PC-3 (cell line): ENCODE measurements at regions of chr19 and their contacts with region 1.

Region 1: DNA sequence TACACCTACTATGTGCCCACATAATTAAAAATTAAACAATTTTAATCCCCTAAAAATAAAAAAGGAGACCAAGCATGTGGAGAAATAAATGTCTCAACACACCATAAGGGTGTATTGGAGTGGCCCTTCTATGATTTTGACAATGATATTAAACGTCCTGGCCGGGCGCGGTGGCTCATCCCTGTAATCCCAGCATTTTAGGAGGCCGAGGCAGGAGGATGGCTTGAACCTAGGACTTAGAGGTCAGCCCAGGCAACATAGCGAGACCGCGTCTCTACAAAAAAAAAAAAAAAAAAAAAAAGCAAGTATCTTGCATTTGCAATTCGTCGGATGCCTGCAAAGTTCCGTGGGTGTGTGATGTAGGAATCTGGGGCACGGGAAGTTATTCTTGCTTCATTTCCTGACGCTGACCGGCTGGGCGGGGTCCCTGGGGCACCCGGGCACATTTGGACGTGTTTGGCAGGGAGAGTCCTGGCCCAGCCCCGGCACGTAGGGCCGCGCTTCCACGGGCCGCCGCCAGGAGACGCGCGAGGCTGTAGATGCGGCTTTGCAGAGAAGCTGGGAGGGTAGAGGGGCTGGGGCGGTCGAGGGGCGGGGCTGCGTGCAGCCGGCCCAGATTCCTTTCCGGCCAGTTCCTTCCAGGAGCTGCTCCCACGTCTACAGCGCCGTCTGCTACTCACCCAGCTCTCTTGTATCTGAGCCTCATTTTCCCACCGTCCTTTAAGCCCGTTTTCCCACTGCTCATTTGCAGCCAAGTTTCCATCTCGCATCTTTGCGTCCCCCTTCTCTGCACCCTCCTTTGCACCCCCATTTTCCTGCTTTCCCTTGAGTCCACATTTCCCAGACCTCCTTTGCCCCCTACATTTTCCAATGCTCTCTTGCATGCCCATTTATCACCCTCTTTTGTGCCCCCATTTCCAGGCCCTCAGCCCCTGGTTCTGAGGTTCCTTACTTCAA is 2.2 kb upstream of the TSPAN16 start:
- DNase-seq: peak; percentile 99
- ATAC-seq: peak; percentile 100
- H3K4me3 ChIP-seq: peak overlapping the region; percentile 53
- H3K27ac ChIP-seq: no peak overlapping the region
- H3K4me1 ChIP-seq: peaks cover 7% of the 10 kb centered on the region
- H3K27me3 ChIP-seq: no peaks in the 10 kb centered on the region
- CTCF ChIP-seq: peak; percentile 99

Region 2: GRCh38 chr19:11242864-11243797 is 50.6 kb before region 1 on chr19:
- CTCF ChIA-PET with region 1: no interaction called
- POLR2A ChIA-PET with region 1: no interaction called
- intact Hi-C with region 1: no loop called
- DNase-seq: peak; percentile 91
- ATAC-seq: peak; percentile 97
- H3K4me3 ChIP-seq: no peak overlapping the region
- H3K27ac ChIP-seq: no peak overlapping the region
- H3K4me1 ChIP-seq: 0 out of 2 replicates have a peak, but pooled peaks cover 3% of the 10 kb centered on the region
- H3K27me3 ChIP-seq: no peaks in the 10 kb centered on the region
- CTCF ChIP-seq: peak; percentile 92

Region 3: DNA sequence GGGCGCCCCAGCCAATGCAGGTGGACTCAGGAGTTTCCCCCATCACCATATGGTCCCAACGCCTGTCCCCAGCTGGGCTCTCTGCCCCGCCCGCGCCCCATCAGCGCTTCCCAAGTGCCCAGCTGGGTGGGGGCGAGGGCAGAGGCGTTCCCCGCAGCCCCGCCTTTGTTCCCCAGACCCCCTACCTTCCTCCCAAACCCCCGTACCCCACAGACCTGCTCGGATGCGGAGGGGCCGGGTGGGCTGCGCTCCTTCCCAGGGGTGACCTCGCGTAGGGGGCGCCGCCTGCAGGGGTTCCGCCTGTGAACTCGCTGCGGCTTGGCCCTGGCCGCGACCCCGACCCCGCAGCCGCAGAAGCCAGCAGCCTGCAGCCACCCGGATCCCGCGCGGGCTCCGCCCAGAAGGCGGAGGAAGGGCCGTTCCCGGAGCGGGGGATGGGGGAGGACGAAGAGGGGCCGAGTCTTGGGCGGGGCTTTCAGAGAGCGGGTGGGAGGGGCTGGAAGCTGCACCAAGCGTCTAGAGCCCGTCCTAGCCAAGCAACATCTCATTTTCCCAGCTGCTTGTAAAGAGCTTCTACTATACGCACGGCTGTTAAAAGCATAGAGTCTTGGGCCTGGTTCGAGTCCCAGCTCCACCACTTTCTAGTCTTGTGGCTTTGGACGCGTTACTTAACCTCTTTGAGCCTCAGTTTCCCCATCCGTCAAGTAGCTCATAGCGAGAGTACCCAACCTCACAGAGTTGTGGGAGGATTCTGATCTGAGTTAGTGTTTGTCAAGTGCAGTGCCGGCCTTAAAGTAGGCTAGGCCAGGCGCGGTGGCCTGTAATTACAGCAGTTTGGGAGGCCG is 45.8 kb after region 1 on chr19 and contains the start of gene RAB3D:
- CTCF ChIA-PET with region 1: interaction called, 10 read pairs
- POLR2A ChIA-PET with region 1: interaction called, 5 read pairs
- intact Hi-C with region 1: loop called (anchors 1 kb)
- DNase-seq: peak; percentile 95
- ATAC-seq: peak; percentile 89
- H3K4me3 ChIP-seq: peak within 1 kb of the TSS; percentile 89
- H3K27ac ChIP-seq: peak within 1 kb of the TSS; percentile 11
- H3K4me1 ChIP-seq: peaks cover 25% of the 10 kb centered on the region
- H3K27me3 ChIP-seq: no peaks in the 10 kb centered on the region
- CTCF ChIP-seq: no peak
- total RNA-seq, gene RAB3D: 34.4 and 37.9 TPM in 2 replicates

Region 4: GRCh38 chr19:11374433-11375142 is 80.9 kb after region 1 on chr19 and contains the start of gene SWSAP1:
- CTCF ChIA-PET with region 1: interaction called, 15 read pairs
- POLR2A ChIA-PET with region 1: no interaction called
- intact Hi-C with region 1: loop called (anchors 1 kb)
- DNase-seq: peak; percentile 100
- ATAC-seq: peak; percentile 85
- H3K4me3 ChIP-seq: peak within 1 kb of the TSS; percentile 68
- H3K27ac ChIP-seq: peak within 1 kb of the TSS; percentile 79
- H3K4me1 ChIP-seq: peaks cover 49% of the 10 kb centered on the region
- H3K27me3 ChIP-seq: no peaks in the 10 kb centered on the region
- CTCF ChIP-seq: no peak
- total RNA-seq, gene SWSAP1: 5.2 and 6.1 TPM in 2 replicates

Region 5: DNA sequence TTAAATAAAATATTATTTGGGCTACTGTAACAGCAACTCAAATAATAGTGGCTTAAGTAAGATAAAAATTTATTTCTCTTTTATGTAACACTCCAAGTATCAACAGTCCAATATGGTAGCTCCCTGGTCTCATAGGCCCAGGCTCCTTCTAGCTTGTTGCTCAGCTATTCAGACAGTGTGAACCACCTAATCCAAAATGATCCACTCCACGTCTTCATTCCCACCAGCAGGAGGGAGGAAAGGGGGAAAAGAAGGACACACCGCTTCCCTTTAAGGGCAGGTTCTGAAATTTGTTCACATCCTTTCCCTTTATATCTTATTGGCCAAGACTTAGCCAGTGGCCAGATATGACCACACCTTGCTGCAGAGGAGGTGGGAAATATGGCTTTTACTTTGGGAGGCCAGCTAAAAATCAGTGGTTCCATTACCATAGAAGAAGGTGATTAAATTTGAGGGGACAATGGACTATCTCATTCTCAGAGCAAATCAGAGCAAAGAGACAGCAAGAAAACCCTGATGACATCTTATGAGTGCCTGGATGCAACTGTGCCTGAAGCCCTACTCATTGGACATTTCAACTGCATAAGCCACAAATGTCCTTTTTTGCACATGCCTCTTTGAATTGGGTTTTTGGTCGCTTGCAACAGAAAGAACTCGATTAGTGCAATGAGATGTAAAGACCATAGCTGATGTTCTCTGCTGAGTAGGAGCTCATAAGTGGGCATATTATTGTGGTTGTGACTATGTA is 97.4 kb after region 1 on chr19:
- CTCF ChIA-PET with region 1: no interaction called
- POLR2A ChIA-PET with region 1: no interaction called
- intact Hi-C with region 1: no loop called
- DNase-seq: peak; percentile 39
- ATAC-seq: no peak
- H3K4me3 ChIP-seq: no peak overlapping the region
- H3K27ac ChIP-seq: no peak overlapping the region
- H3K4me1 ChIP-seq: no peaks in the 10 kb centered on the region
- H3K27me3 ChIP-seq: no peaks in the 10 kb centered on the region
- CTCF ChIP-seq: no peak

Region 6: GRCh38 chr19:11435058-11435832 is 141.5 kb after region 1 on chr19 and contains the starts of genes ODAD3 and PRKCSH:
- CTCF ChIA-PET with region 1: interaction called, 6 read pairs
- POLR2A ChIA-PET with region 1: no interaction called
- intact Hi-C with region 1: loop called (anchors 5 kb)
- DNase-seq: peak; percentile 100
- ATAC-seq: peak; percentile 93
- H3K4me3 ChIP-seq: peak within 1 kb of the TSS; percentile 87
- H3K27ac ChIP-seq: peak within 1 kb of the TSS; percentile 23
- H3K4me1 ChIP-seq: peaks cover 13% of the 10 kb centered on the region
- H3K27me3 ChIP-seq: no peaks in the 10 kb centered on the region
- CTCF ChIP-seq: peak; percentile 88
- total RNA-seq, gene ODAD3: 0.52 and 3.9 TPM in 2 replicates
- total RNA-seq, gene PRKCSH: 222 and 266 TPM in 2 replicates

Region 7: GRCh38 chr19:11482384-11483050 is 188.8 kb after region 1 on chr19:
- CTCF ChIA-PET with region 1: interaction called, 8 read pairs
- POLR2A ChIA-PET with region 1: no interaction called
- intact Hi-C with region 1: loop called (anchors 1 kb)
- DNase-seq: peak; percentile 88
- ATAC-seq: peak; percentile 81
- H3K4me3 ChIP-seq: peak overlapping the region; percentile 59
- H3K27ac ChIP-seq: no peak overlapping the region
- H3K4me1 ChIP-seq: peaks cover 7% of the 10 kb centered on the region; the same call in 1 of the 2 replicates
- H3K27me3 ChIP-seq: peaks cover 14% of the 10 kb centered on the region; the same call in 1 of the 2 replicates
- CTCF ChIP-seq: peak; percentile 96